ENCODE measurements at regions of chr3 and their contacts with region 1.

Region 1: GRCh38 chr3:128095222-128095703 is 28.3 kb downstream of the RUVBL1 start:
- DNase-seq: peak; percentile 92

Region 2: DNA sequence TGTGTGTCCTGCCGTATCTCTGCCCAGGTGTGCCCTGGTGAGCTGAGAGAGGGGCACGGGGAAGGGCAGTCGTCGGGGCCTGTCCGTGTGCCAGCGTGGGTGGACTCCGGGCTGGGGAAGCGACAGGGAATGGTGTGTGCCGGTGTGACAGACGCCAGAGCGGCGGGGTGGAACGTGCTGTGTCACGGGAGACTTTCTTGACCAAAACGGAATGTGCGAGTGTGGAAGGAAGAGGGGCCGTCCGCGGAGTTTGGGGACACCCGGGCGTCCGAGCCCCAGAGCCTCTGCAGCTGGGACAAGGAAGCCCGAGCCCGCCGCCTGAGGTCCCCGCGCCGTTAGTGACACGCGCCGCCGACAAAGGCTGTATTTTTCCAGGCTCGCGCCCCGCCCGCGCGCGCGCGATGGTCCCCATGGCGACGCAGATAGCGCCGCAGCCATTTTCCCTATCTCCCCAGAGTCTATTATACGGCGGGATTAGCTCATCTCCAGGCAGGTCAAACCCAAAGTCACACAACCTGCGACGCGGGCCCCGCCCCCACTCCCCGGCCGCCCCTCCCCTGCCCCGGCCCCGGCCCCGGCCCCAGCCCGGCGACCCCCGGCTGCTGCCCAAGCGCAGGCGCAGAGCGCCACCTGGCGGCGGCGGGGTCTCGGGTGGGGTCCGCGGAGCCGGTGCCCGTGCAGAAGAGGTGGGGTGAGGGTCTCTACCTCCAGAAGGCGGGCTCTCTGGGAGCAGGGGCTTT is 402.3 kb after region 1 on chr3:
- intact Hi-C with region 1: loop called in 1 of 2 experiments (anchors 10 kb)
- DNase-seq: peak; percentile 87

Region 3: GRCh38 chr3:128607710-128608048 is 512.4 kb after region 1 on chr3:
- intact Hi-C with region 1: loop called (anchors 5 to 10 kb)
- DNase-seq: no peak

Region 4: GRCh38 chr3:128617557-128618397 is 522.5 kb after region 1 on chr3:
- intact Hi-C with region 1: loop called in 1 of 2 experiments (anchors 10 kb)
- DNase-seq: peak; percentile 100